ENCODE measurements at regions of chr7 and their contacts with region 1.

Region 1: GRCh38 chr7:122736183-122736582 is 33.5 kb upstream of the RNF148 start:
- DNase-seq: no peak
- H3K4me3 ChIP-seq: no peak overlapping the region
- H3K27ac ChIP-seq: no peak overlapping the region
- H3K4me1 ChIP-seq: no peaks in the 10 kb centered on the region
- H3K27me3 ChIP-seq: no peaks in the 10 kb centered on the region
- CTCF ChIP-seq: no peak

Region 2: DNA sequence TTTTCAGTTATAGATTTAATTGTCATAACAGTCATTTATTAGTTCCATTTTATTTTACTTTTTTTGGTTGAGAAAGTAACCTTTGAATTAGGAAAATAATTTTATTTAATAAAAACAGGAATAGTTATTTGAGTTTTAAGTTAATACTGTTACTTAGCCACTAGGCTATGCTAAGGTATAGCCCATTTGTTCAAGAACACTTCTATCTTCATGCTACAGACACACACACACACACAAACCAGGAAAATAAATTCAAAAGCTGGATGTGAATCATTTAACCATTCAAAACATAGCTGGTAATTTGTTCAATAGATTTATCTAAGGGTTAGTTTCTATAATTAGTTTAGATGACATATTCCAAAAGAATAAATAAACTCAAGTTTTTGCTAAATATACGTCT is 185.6 kb before region 1 on chr7:
- CTCF ChIA-PET with region 1: no interaction called
- POLR2A ChIA-PET with region 1: no interaction called
- intact Hi-C with region 1: loop called (anchors 10 kb)
- DNase-seq: no peak
- H3K4me3 ChIP-seq: no peak overlapping the region
- H3K27ac ChIP-seq: no peak overlapping the region
- H3K4me1 ChIP-seq: no peaks in the 10 kb centered on the region
- H3K27me3 ChIP-seq: no peaks in the 10 kb centered on the region
- CTCF ChIP-seq: 0 out of 2 replicates have a peak, but pooled peaks have one; percentile 31

Measured in PC-9 (cell line).